Body of pancreas (tissue), 4 donors: ENCODE measurements at regions of chr4 and their contacts with region 1.

Region 1: DNA sequence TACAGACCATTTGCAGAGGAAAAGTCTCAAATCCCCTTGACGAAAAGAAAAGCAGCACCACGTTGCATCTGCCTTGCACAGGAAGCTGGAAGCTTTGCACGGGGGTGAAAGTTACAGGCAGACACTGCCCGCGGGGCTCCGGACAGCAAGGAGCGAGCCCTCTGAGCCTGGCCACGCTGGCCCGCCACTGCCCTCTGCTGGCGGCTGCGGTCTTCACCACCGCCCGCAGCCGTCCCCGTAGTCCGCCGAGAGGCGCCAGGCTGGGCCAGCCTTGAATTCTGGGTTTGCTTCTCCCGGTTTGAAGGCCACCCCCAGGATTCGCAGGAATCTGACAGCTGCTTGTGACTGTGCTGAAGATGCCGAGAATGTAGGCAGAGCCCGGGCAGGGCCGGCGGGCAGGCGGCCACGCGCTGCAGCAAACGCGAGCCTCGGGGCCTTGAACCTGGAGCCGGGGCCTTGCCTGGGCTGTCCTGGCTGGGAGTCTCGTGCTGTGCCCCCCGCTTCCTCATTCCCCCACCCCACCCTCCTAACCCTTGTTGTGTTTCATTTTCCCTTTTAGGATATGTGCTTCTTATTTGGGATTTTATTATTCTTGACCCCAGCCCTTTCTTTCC is 49.2 kb downstream of the ENPP6 start:
- DNase-seq: peak; percentile 69 to 83 (median 77)
- ATAC-seq: peak; percentile 91
- H3K4me3 ChIP-seq: no peak overlapping the region
- H3K27ac ChIP-seq: no peak overlapping the region
- H3K4me1 ChIP-seq: peaks cover 6% of the 10 kb centered on the region
- H3K27me3 ChIP-seq: peaks cover 0 to 3% of the 10 kb centered on the region in 2 donors
- CTCF ChIP-seq: peak; percentile 83 to 98 (median 93)
- POLR2A ChIP-seq: no peak

Region 2: DNA sequence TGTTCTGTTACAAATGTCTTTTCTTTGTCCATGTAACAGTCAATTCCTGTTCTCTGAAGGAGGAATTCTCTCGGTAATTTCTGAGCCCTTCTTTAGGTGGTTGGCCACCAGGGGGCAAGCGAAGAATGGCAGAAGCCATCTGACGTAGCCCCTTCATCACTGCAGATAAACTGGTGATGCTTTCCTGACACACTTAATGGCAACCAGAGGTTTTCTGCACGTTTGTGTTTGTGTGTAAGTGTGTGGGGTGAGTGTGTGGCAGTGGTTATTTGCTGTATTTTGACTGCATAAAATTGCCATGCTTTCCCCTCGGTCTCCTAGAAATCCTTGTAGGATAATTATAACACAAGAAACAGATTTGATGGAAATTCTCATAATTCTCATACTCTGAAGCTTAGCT is 328.2 kb before region 1 on chr4:
- intact Hi-C with region 1: loop called (anchors 5 kb)
- DNase-seq: peak; percentile 79 to 88 (median 84)
- ATAC-seq: peak; percentile 73
- H3K4me3 ChIP-seq: no peak overlapping the region
- H3K27ac ChIP-seq: no peak overlapping the region
- H3K4me1 ChIP-seq: no peaks in the 10 kb centered on the region
- H3K27me3 ChIP-seq: no peaks in the 10 kb centered on the region
- CTCF ChIP-seq: peak; percentile 72 to 93 (median 86)
- POLR2A ChIP-seq: no peak